Psoas muscle (tissue), 8 donors: ENCODE measurements at regions of chr1 and their contacts with region 1.

Region 1: DNA sequence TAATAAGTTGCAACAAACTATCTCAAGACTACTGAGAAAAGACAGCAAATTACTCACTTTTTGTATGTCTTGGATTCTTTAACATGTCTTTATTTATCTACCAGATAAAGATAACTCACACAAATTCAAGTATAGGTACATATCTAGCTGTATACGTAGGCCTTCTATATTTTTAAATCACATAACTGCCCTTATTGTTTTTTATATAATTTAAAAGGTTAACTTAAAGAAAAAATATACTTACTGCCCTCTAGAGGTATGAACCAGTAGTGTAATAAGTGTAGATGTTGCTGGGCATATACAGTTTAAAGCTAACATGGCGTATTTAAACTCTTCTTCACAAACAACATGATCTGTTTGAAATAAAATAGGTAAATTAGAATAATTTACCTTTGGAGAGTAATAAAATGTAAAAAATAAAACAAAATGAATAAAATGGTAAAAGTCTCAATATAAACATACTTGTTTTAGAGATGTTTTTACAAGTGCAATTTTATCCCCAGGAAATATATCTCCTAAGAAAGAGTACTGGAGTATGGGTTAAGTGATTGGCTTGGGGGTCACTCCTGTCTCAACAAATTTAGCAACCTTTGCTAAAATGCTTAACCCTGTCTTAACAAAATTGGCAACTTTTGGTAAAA is 235.2 kb downstream of the KCNT2 start:
- DNase-seq: no peak
- ATAC-seq: no peak
- H3K4me3 ChIP-seq: no peak overlapping the region
- H3K27ac ChIP-seq: no peak overlapping the region
- H3K4me1 ChIP-seq: no peaks in the 10 kb centered on the region
- H3K27me3 ChIP-seq: no peaks in the 10 kb centered on the region
- CTCF ChIP-seq: peak; percentile 45

Region 2: DNA sequence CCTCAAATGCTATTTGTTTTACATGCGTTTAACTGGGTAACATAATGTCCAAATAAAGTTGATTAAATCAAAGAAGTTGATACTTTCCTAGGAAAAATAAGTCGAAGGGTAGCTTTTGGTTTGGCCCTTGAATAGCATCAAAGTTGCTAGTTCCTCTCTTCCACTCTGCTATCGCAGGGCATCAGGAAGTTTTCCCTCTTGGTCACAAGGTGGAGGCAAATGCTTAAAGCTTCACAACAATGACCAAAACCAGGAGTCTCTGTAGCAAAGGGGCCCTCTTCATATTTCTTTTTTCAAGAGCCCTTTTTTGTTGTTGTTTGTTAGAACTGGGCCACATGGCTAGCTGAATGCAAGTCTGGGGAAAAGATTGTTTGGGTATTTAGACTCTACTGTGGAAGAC is 433.2 kb before region 1 on chr1:
- intact Hi-C with region 1: loop called in 1 of 2 experiments (anchors 5 kb)
- DNase-seq: no peak
- ATAC-seq: no peak
- H3K4me3 ChIP-seq: no peak overlapping the region
- H3K27ac ChIP-seq: no peak overlapping the region
- H3K4me1 ChIP-seq: no peaks in the 10 kb centered on the region
- H3K27me3 ChIP-seq: no peaks in the 10 kb centered on the region
- CTCF ChIP-seq: no peak